Gastrocnemius medialis (tissue), 4 donors: ENCODE measurements at regions of chr9 and their contacts with region 1.

Region 1: GRCh38 chr9:111691672-111692329 is 30.4 kb downstream of the GNG10 start:
- DNase-seq: no peak
- ATAC-seq: peak in 1 of 2 donors; percentile 39
- H3K4me3 ChIP-seq: no peak overlapping the region
- H3K27ac ChIP-seq: no peak overlapping the region
- H3K4me1 ChIP-seq: no peaks in the 10 kb centered on the region
- H3K27me3 ChIP-seq: no peaks in the 10 kb centered on the region
- CTCF ChIP-seq: peak in 1 of 5 experiments; percentile 18
- POLR2A ChIP-seq: no peak

Region 2: GRCh38 chr9:111597817-111598729 is 93.7 kb before region 1 on chr9:
- in situ Hi-C with region 1: no loop called
- intact Hi-C with region 1: loop called (anchors 2 kb)
- DNase-seq: peak; percentile 35 to 54
- ATAC-seq: peak; percentile 61 to 62
- H3K4me3 ChIP-seq: peak overlapping the region; percentile 66 to 89 (median 80)
- H3K27ac ChIP-seq: peak overlapping the region; percentile 69 to 81 (median 78)
- H3K4me1 ChIP-seq: peaks cover 0 to 9% of the 10 kb centered on the region in 2 donors
- H3K27me3 ChIP-seq: no peaks in the 10 kb centered on the region
- CTCF ChIP-seq: peak; percentile 10 to 63 (median 40)
- POLR2A ChIP-seq: no peak

Region 3: DNA sequence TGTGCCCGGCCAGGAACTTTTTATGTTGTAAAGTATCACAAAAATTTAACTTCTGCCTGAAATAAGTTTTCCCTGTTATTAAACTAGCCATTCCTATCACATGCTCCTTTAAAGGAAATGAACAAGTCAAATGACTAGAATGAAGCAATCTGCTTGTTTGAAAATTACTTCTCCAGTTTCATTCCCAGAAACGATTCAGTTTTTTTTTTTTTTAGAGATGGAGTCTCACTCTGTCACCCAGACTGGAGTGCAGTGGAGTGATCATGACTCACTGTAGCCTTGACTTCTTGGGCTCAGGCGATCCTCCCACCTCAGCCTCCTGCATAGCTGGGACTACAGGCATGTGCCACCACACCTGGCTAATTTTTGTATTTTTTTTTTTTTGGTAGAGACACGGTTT is 43.7 kb before region 1 on chr9:
- in situ Hi-C with region 1: no loop called
- intact Hi-C with region 1: no loop called
- DNase-seq: no peak
- ATAC-seq: no peak
- H3K4me3 ChIP-seq: no peak overlapping the region
- H3K27ac ChIP-seq: no peak overlapping the region
- H3K4me1 ChIP-seq: no peaks in the 10 kb centered on the region
- H3K27me3 ChIP-seq: no peaks in the 10 kb centered on the region
- CTCF ChIP-seq: no peak
- POLR2A ChIP-seq: no peak